CD4-positive, alpha-beta T cell (primary cell): ENCODE measurements at regions of chr2 and their contacts with region 1.

Region 1: DNA sequence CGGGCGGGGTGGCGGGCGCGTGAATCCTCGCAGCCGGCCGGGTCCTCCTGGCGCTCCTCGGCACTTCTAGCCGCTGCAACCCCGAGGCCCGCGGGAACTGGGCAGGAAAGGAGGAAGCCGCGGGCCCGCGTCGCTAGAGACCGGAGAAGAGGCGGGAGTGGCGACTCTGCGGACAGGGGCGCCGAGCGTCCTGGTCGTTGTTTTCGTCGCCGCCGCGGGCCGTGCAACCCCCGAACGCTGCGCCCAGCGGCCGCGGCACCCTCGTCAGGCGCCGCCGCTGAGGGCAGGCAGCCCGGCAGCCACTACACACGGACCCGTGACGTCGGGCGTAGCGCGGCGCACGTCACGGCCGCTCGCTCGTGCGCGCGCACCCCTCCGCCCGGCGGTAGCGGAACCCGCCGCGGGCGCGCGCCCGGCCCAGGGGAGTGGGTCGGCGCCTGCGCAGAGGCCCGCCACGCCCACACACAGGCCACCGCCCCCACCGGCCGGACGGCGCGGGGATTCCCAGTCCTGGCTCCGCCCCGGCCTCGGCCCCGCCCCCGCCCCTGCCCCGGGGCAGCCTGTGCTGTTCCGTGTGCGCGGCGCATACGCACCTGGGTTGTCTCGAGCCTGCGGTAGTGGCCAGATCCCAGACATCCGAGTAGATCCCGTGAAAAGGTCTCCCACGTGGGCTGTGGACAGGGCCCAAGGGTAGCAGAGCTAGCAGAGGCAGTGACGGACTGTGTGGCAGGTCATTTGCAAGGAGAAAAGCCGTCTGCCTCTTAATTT is at the start of gene MAP3K2:
- DNase-seq: peak; percentile 87 to 99 (median 96)
- ATAC-seq: peak; percentile 69
- H3K4me3 ChIP-seq: peak within 1 kb of the TSS; percentile 82
- H3K4me3 Mint-ChIP-seq: peak within 1 kb of the TSS; percentile 98
- H3K27ac ChIP-seq: peak within 1 kb of the TSS; percentile 99 to 100
- H3K27ac Mint-ChIP-seq: peak within 1 kb of the TSS; percentile 100
- H3K4me1 ChIP-seq: peaks cover 33% of the 10 kb centered on the region
- H3K4me1 Mint-ChIP-seq: peaks cover 69% of the 10 kb centered on the region
- H3K27me3 ChIP-seq: no peaks in the 10 kb centered on the region
- H3K27me3 Mint-ChIP-seq: no peaks in the 10 kb centered on the region
- CTCF ChIP-seq: no peak
- total RNA-seq, gene MAP3K2: 103 to 105 TPM

Region 2: GRCh38 chr2:127293748-127294562 is 93.9 kb before region 1 on chr2 and contains the start of gene ERCC3:
- CTCF ChIA-PET with region 1: no interaction called
- POLR2A ChIA-PET with region 1: interaction called, 6 read pairs
- intact Hi-C with region 1: loop called in 1 of 2 experiments (anchors 10 kb)
- DNase-seq: peak; percentile 56 to 88 (median 74)
- ATAC-seq: peak; percentile 86
- H3K4me3 ChIP-seq: peak within 1 kb of the TSS; percentile 93
- H3K4me3 Mint-ChIP-seq: peak within 1 kb of the TSS; percentile 93
- H3K27ac ChIP-seq: peak within 1 kb of the TSS; percentile 60 to 69
- H3K27ac Mint-ChIP-seq: peak within 1 kb of the TSS; percentile 79
- H3K4me1 ChIP-seq: peaks cover 20% of the 10 kb centered on the region
- H3K4me1 Mint-ChIP-seq: peaks cover 36% of the 10 kb centered on the region
- H3K27me3 ChIP-seq: no peaks in the 10 kb centered on the region
- H3K27me3 Mint-ChIP-seq: no peaks in the 10 kb centered on the region
- CTCF ChIP-seq: no peak
- total RNA-seq, gene ERCC3: 40.0 to 44.0 TPM

Region 3: GRCh38 chr2:127407661-127408003 is 19.8 kb after region 1 on chr2:
- CTCF ChIA-PET with region 1: interaction called, 3 read pairs
- POLR2A ChIA-PET with region 1: no interaction called
- intact Hi-C with region 1: loop called in 1 of 2 experiments (anchors 2 kb)
- DNase-seq: no peak
- ATAC-seq: no peak
- H3K4me3 ChIP-seq: peak overlapping the region; percentile 37
- H3K4me3 Mint-ChIP-seq: peak overlapping the region; percentile 80
- H3K27ac ChIP-seq: no peak overlapping the region
- H3K27ac Mint-ChIP-seq: peak overlapping the region; percentile 27
- H3K4me1 ChIP-seq: peaks cover 25% of the 10 kb centered on the region
- H3K4me1 Mint-ChIP-seq: peaks cover 13% of the 10 kb centered on the region
- H3K27me3 ChIP-seq: no peaks in the 10 kb centered on the region
- H3K27me3 Mint-ChIP-seq: no peaks in the 10 kb centered on the region
- CTCF ChIP-seq: no peak

Region 4: GRCh38 chr2:127424598-127425379 is 37.0 kb after region 1 on chr2:
- CTCF ChIA-PET with region 1: no interaction called
- POLR2A ChIA-PET with region 1: no interaction called
- intact Hi-C with region 1: no loop called
- DNase-seq: no peak
- ATAC-seq: no peak
- H3K4me3 ChIP-seq: no peak overlapping the region
- H3K4me3 Mint-ChIP-seq: no peak overlapping the region
- H3K27ac ChIP-seq: no peak overlapping the region
- H3K27ac Mint-ChIP-seq: no peak overlapping the region
- H3K4me1 ChIP-seq: peaks cover 14% of the 10 kb centered on the region
- H3K4me1 Mint-ChIP-seq: peaks cover 8% of the 10 kb centered on the region
- H3K27me3 ChIP-seq: peaks cover 22 to 29% of the 10 kb centered on the region in 2 experiments
- H3K27me3 Mint-ChIP-seq: peaks cover 50% of the 10 kb centered on the region
- CTCF ChIP-seq: no peak

Region 5: DNA sequence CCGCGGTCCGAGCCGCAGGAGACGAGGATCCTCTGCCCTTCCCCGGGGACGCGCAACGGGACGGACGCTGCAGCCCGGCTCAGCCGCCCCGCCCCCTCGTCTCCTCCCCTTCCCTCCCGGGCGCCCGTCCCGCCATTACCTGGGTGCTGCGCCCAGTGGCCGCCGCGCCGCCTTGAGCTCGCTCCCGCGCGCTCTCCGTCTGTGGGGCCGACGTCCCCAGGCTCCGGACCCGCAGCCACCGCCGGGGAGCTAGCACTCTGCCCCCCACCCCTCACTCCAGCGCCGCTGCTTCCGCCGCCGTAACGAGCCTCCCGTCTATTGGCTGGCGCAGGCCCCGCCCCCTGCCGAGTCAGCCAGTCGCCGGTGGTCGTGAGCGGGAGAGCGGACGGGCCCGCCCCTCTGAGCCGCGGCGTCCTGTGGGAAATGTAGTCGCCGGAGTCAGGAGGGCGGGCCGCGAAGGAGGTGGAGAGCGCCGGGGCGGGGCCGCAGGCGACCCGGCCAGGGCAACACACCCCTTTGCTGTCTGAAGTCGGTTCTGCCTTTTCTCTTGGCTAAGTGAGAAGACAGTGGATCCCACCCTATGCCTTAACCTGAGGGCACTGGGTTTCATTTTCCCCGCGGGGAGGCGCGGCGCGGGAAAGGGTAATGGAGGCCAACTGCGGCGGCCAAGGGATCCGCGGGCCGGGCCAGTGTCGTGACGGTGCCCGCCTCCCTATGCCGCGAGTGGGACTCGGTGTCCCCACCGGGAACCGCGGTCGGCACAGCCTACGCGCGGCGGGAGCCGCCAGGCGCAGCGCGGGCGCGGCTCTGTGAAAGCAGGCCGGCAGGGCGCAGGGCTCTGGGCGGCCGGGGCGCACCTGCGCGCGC is 640.2 kb after region 1 on chr2 and contains the start of gene SAP130:
- CTCF ChIA-PET with region 1: no interaction called
- POLR2A ChIA-PET with region 1: no interaction called
- intact Hi-C with region 1: loop called in 1 of 2 experiments (anchors 5 kb)
- DNase-seq: peak; percentile 96 to 99 (median 98)
- ATAC-seq: peak; percentile 76
- H3K4me3 ChIP-seq: peak within 1 kb of the TSS; percentile 77
- H3K4me3 Mint-ChIP-seq: peak within 1 kb of the TSS; percentile 99
- H3K27ac ChIP-seq: peak within 1 kb of the TSS; percentile 85 to 89
- H3K27ac Mint-ChIP-seq: peak within 1 kb of the TSS; percentile 96
- H3K4me1 ChIP-seq: peaks cover 15% of the 10 kb centered on the region
- H3K4me1 Mint-ChIP-seq: peaks cover 30% of the 10 kb centered on the region
- H3K27me3 ChIP-seq: no peaks in the 10 kb centered on the region
- H3K27me3 Mint-ChIP-seq: no peaks in the 10 kb centered on the region
- CTCF ChIP-seq: no peak
- total RNA-seq, gene SAP130: 19.2 to 21.0 TPM